GM12878 (cell line): ENCODE measurements at regions of chr4 and their contacts with region 1.

Region 1: DNA sequence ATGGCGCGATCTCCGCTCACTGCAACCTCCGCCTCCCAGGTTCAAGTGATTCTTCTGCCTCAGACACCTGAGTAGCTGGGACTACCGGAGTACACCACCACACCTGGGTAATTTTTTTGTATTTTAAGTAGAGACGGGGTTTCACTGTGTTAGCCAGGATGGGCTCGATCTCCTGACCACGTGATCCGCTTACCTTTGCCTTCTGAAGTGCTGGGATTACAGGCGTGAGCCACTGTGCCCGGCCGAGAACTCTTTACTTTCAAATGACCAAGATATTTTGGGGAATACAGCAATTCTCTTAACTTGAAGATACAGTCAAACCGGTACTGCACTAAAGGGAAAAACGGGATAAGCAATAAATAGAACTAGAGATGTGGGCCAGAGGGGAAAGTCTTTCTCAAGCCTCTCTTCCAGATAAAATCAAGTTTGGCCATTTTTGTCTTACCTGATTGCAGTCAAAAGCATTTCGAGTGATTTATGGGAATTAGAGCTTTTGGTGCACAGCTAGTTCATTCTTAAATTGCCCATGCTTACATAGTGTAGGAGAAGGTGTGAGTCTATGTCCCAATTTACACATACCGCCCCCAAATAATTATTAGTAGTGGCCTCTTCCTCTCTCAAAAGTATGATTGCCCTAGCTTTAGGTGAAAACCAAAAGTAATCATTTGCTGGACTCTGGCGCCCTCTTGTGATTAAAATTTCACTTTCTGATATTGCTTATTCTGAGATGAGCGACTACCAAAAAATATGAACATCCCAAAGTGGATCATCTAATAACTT is 53.2 kb upstream of the ABCG2 start:
- DNase-seq: no peak
- ATAC-seq: peak; percentile 87
- H3K4me3 ChIP-seq: no peak overlapping the region
- H3K27ac ChIP-seq: no peak overlapping the region
- H3K4me1 ChIP-seq: no peaks in the 10 kb centered on the region
- H3K27me3 ChIP-seq: no peaks in the 10 kb centered on the region
- CTCF ChIP-seq: peak; percentile 43 to 77 (median 69)
- EP300 ChIP-seq: no peak
- POLR2A ChIP-seq: no peak
- RAD21 ChIP-seq: peak; percentile 95

Region 2: GRCh38 chr4:87498446-87498900 is 713.2 kb before region 1 on chr4:
- CTCF ChIA-PET with region 1: interaction called, 10 read pairs
- POLR2A ChIA-PET with region 1: no interaction called
- RAD21 ChIA-PET with region 1: interaction called, 3 read pairs
- SMC1A ChIA-PET with region 1: no interaction called
- in situ Hi-C with region 1: no loop called
- intact Hi-C with region 1: loop called (anchors 2 kb)
- DNase-seq: no peak
- ATAC-seq: peak; percentile 85
- H3K4me3 ChIP-seq: no peak overlapping the region
- H3K27ac ChIP-seq: no peak overlapping the region
- H3K4me1 ChIP-seq: peaks cover 4% of the 10 kb centered on the region
- H3K27me3 ChIP-seq: no peaks in the 10 kb centered on the region
- CTCF ChIP-seq: no peak
- EP300 ChIP-seq: no peak
- POLR2A ChIP-seq: no peak
- RAD21 ChIP-seq: no peak

Region 3: GRCh38 chr4:87848622-87849351 is 362.9 kb before region 1 on chr4:
- CTCF ChIA-PET with region 1: interaction called, 54 read pairs
- POLR2A ChIA-PET with region 1: no interaction called
- RAD21 ChIA-PET with region 1: interaction called, 7 read pairs
- SMC1A ChIA-PET with region 1: interaction called, 18 read pairs
- in situ Hi-C with region 1: loop called (anchors 5 kb)
- intact Hi-C with region 1: loop called (anchors 1 kb)
- DNase-seq: no peak
- ATAC-seq: peak; percentile 98
- H3K4me3 ChIP-seq: no peak overlapping the region
- H3K27ac ChIP-seq: no peak overlapping the region
- H3K4me1 ChIP-seq: no peaks in the 10 kb centered on the region
- H3K27me3 ChIP-seq: no peaks in the 10 kb centered on the region; a peak in 1 of 4 replicates
- CTCF ChIP-seq: peak; percentile 49 to 64 (median 59); a peak in 5 of 6 replicates
- EP300 ChIP-seq: no peak
- POLR2A ChIP-seq: no peak
- RAD21 ChIP-seq: peak; percentile 57

Region 4: GRCh38 chr4:88033309-88033708 is 178.4 kb before region 1 on chr4:
- CTCF ChIA-PET with region 1: interaction called, 159 read pairs
- POLR2A ChIA-PET with region 1: no interaction called
- RAD21 ChIA-PET with region 1: interaction called, 41 read pairs
- SMC1A ChIA-PET with region 1: interaction called, 25 read pairs
- in situ Hi-C with region 1: loop called (anchors 5 kb)
- intact Hi-C with region 1: loop called (anchors 1 kb)
- DNase-seq: no peak
- ATAC-seq: peak; percentile 87
- H3K4me3 ChIP-seq: no peak overlapping the region
- H3K27ac ChIP-seq: no peak overlapping the region
- H3K4me1 ChIP-seq: no peaks in the 10 kb centered on the region
- H3K27me3 ChIP-seq: no peaks in the 10 kb centered on the region
- CTCF ChIP-seq: peak; percentile 51 to 66 (median 64)
- EP300 ChIP-seq: no peak
- POLR2A ChIP-seq: no peak
- RAD21 ChIP-seq: peak; percentile 78

Region 5: DNA sequence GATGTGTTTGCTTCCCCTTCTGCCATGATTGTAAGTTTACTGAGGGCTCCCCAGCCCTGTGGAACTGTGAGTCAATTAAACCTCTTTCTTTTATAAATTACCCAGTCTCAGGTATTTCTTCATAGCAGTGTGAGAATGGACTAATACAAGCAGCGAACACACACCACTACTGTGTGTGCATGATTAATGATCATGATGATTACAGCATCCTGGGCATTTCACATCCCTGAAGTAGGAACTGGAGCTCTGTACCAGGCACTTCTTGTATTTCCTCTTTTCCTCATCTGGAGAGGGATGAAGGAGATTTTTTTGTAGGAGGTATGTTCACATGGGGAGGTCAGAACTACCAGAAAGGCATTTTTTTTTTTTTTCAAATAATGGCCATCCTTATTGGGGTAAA is 11.9 kb after region 1 on chr4:
- CTCF ChIA-PET with region 1: interaction called, 11 read pairs
- POLR2A ChIA-PET with region 1: no interaction called
- RAD21 ChIA-PET with region 1: interaction called, 4 read pairs
- SMC1A ChIA-PET with region 1: interaction called, 5 read pairs
- in situ Hi-C with region 1: no loop called
- intact Hi-C with region 1: no loop called
- DNase-seq: no peak
- ATAC-seq: no peak
- H3K4me3 ChIP-seq: no peak overlapping the region
- H3K27ac ChIP-seq: no peak overlapping the region
- H3K4me1 ChIP-seq: no peaks in the 10 kb centered on the region
- H3K27me3 ChIP-seq: no peaks in the 10 kb centered on the region
- CTCF ChIP-seq: no peak
- EP300 ChIP-seq: no peak
- POLR2A ChIP-seq: no peak
- RAD21 ChIP-seq: no peak